ENCODE measurements at regions of chr2 and their contacts with region 1.

Region 1: GRCh38 chr2:36355151-36355889 is at the start of gene CRIM1:
- DNase-seq: peak; percentile 89
- H3K4me3 ChIP-seq: peak within 1 kb of the TSS; percentile 82
- H3K27ac ChIP-seq: peak within 1 kb of the TSS; percentile 88
- H3K4me1 ChIP-seq: no peaks in the 10 kb centered on the region
- H3K27me3 ChIP-seq: no peaks in the 10 kb centered on the region
- CTCF ChIP-seq: no peak
- total RNA-seq, gene CRIM1: 55.7 to 90.7 TPM

Region 2: GRCh38 chr2:36290306-36290705 is 65.0 kb before region 1 on chr2:
- intact Hi-C with region 1: no loop called
- DNase-seq: no peak
- H3K4me3 ChIP-seq: no peak overlapping the region
- H3K27ac ChIP-seq: no peak overlapping the region
- H3K4me1 ChIP-seq: no peaks in the 10 kb centered on the region
- H3K27me3 ChIP-seq: no peaks in the 10 kb centered on the region
- CTCF ChIP-seq: no peak

Region 3: GRCh38 chr2:36461039-36461681 is 105.8 kb after region 1 on chr2:
- intact Hi-C with region 1: loop called (anchors 5 kb)
- DNase-seq: no peak
- H3K4me3 ChIP-seq: no peak overlapping the region
- H3K27ac ChIP-seq: peak overlapping the region; percentile 28
- H3K4me1 ChIP-seq: no peaks in the 10 kb centered on the region
- H3K27me3 ChIP-seq: no peaks in the 10 kb centered on the region
- CTCF ChIP-seq: no peak

Region 4: DNA sequence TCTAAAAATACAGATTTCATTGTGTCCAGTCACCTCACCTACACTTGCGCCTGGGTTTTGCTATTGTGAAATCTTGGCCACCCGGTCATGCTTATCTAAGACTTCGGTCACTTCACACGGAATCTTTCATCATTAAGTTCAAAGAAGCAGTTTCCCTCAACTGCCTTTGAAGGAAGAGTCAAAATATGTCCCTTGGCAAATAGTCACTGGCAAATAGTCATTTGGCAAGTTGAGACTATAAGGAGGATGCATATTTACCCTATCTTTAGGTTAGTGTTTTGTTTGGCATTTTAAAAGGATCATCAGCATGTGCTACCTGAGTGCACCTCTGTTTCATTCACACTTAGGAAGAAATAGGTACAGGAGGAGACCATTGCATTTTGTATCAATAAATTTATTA is 146.8 kb after region 1 on chr2:
- intact Hi-C with region 1: loop called (anchors 5 kb)
- DNase-seq: no peak
- H3K4me3 ChIP-seq: no peak overlapping the region
- H3K27ac ChIP-seq: no peak overlapping the region
- H3K4me1 ChIP-seq: no peaks in the 10 kb centered on the region
- H3K27me3 ChIP-seq: no peaks in the 10 kb centered on the region
- CTCF ChIP-seq: no peak

Region 5: DNA sequence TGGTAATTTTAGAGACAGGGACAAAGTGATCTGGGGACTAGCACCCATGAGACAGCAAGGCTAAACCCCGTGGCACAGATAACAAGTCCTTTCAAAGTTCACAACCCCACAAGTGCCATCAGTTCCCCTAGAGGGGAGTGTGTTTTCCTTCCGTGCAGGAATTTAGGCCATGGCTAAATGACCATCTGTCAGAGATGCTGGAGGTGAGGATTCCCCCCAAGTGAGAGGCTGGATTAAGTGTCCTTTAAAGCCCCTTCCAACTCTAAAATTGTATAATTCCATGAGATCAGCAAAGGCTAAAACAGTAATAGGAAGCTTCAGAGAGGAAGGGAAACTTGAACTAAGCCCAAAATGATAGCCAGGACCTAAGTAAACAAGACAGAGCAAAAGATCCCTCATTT is 233.9 kb after region 1 on chr2:
- intact Hi-C with region 1: no loop called
- DNase-seq: no peak
- H3K4me3 ChIP-seq: no peak overlapping the region
- H3K27ac ChIP-seq: no peak overlapping the region
- H3K4me1 ChIP-seq: no peaks in the 10 kb centered on the region
- H3K27me3 ChIP-seq: no peaks in the 10 kb centered on the region
- CTCF ChIP-seq: no peak

Region 6: GRCh38 chr2:36663851-36664695 is 308.8 kb after region 1 on chr2:
- intact Hi-C with region 1: loop called (anchors 5 kb)
- DNase-seq: peak; percentile 32
- H3K4me3 ChIP-seq: no peak overlapping the region
- H3K27ac ChIP-seq: no peak overlapping the region
- H3K4me1 ChIP-seq: no peaks in the 10 kb centered on the region
- H3K27me3 ChIP-seq: no peaks in the 10 kb centered on the region
- CTCF ChIP-seq: peak; percentile 57